Right lobe of liver (tissue), 6 donors: ENCODE measurements at regions of chr7 and their contacts with region 1.

Region 1: DNA sequence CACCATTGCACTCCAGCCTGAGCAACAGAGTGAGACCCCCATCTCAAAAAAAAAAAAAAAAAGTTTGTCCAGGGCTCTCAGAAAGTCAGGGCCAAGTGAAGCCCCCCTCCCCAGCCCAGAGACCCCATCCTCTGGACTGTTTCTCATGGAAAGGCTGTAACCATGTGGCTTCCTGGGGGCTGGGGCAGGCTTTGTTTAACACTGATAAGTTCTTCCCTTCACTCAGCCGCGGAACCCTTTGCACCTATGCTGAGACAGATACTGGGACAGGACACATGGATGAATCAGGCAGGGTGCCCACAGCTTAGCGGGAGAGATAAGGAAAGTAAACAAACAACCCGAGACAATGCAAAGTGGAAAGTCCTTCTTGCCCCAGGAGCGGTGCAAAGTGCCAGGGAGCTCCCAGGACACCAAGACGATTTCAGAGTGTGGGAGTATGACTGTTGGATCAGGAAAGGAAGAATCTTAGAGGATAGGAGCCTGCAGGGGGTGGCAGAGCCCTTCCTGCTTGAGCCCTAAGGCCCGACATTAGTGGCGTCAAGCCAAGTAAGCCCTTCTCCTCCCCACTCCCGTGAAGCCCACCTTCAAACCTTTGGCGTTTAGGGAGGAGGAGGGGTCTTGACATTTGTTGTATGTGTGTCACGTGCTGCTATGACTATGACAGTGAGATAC is 11.6 kb downstream of the MLXIPL start:
- DNase-seq: peak; percentile 90 to 97 (median 93)
- ATAC-seq: peak; percentile 73 to 87 (median 78)
- H3K4me3 ChIP-seq: peak overlapping the region in 2 of 3 donors; percentile 21 to 32
- H3K27ac ChIP-seq: peak overlapping the region; percentile 23 to 91 (median 82)
- H3K4me1 ChIP-seq: peaks cover 0 to 80% (median 36%) of the 10 kb centered on the region in 4 donors
- H3K27me3 ChIP-seq: no peaks in the 10 kb centered on the region
- CTCF ChIP-seq: no peak
- POLR2A ChIP-seq: no peak

Region 2: DNA sequence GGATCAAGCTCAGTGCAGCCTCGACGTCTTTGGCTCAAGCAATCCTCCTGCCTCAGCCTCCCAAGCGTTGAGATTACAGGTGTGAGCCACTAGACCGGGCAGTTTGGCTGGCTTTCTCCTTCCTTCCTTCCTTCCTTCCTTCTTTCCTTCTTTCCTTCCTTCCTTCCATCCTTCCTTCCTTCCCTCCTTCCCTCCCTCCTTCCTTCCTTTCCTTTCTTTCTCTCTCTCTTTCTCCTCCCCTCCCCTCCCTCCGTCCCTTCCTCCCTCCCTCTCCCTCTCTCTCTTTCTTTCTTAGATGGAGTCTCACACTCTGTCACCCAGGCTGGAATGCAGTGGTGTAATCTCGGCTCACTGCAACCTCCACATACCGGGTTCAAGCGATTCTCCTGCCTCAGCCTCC is 47.3 kb after region 1 on chr7:
- intact Hi-C with region 1: loop called in 1 of 2 experiments (anchors 5 kb)
- DNase-seq: no peak
- ATAC-seq: no peak
- H3K4me3 ChIP-seq: no peak overlapping the region
- H3K27ac ChIP-seq: no peak overlapping the region
- H3K4me1 ChIP-seq: no peaks in the 10 kb centered on the region
- H3K27me3 ChIP-seq: no peaks in the 10 kb centered on the region
- CTCF ChIP-seq: no peak
- POLR2A ChIP-seq: no peak

Region 3: DNA sequence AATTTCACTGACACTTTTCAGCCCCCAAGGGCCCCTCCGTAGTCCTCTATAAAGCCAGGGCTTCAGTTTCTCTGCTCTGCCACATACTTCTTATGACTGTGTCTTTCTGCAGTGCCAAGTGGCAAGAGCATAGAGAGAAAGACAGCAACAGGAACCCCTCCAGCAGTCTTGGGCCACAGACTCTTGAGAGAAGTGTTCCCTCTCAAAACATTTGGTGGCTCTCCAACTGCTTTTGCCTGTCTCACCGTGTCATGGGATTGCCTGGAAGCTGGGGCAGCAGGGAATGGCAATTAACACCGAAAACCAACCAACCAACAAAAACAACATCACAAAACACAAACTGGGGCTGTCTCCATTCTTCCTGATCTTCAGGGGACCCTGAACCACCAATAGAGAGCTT is 341.4 kb after region 1 on chr7:
- intact Hi-C with region 1: no loop called
- DNase-seq: no peak
- ATAC-seq: no peak
- H3K4me3 ChIP-seq: no peak overlapping the region
- H3K27ac ChIP-seq: no peak overlapping the region
- H3K4me1 ChIP-seq: no peaks in the 10 kb centered on the region
- H3K27me3 ChIP-seq: no peaks in the 10 kb centered on the region
- CTCF ChIP-seq: no peak
- POLR2A ChIP-seq: no peak